B cell (primary cell): ENCODE measurements at regions of chr16 and their contacts with region 1.

Region 1: DNA sequence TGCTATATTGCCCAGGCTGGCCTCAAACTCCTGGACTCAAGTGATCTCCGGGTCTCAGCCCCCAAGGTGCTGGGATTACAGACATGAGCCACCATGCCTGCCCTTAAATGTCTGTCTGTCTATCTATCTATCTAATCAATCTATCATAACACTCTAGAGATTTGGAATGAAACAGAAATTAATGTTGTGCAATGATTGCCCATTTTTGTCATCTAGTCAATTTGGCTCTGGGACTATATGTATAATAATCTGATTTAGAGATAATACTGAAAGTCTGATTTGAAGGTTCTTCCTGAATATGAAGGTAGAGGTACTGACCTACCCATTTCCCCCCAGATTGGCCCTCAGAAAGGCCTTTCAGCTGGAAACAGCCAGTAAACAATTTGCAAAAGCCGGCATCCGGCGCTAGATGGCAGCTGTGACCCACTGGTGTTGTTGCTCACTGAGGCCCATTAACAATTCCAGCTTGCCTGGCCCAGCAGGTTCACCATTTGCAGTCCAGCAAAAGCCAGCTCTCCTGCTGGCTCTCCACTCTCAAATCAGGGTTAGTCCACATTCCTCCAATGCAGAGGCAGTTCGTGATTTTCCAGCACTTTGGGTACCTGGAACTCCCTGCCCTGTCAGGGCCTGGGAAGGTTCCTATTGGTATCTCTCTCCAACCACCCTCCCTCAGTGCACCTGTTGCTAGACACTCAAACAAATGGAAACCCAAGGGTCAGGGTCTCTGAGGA is 22.9 kb upstream of the C16orf87 start:
- DNase-seq: peak; percentile 74
- ATAC-seq: peak; percentile 69
- H3K4me3 ChIP-seq: no peak overlapping the region
- H3K4me3 Mint-ChIP-seq: no peak overlapping the region
- H3K27ac ChIP-seq: no peak overlapping the region
- H3K27ac Mint-ChIP-seq: peak overlapping the region; percentile 7
- H3K4me1 ChIP-seq: peaks cover 6 to 18% of the 10 kb centered on the region in 2 donors
- H3K4me1 Mint-ChIP-seq: peaks cover 17% of the 10 kb centered on the region
- H3K27me3 ChIP-seq: no peaks in the 10 kb centered on the region
- H3K27me3 Mint-ChIP-seq: no peaks in the 10 kb centered on the region
- CTCF ChIP-seq: peak; percentile 80

Region 2: GRCh38 chr16:46591257-46591656 is 262.6 kb before region 1 on chr16:
- CTCF ChIA-PET with region 1: no interaction called
- POLR2A ChIA-PET with region 1: no interaction called
- intact Hi-C with region 1: no loop called
- DNase-seq: no peak
- ATAC-seq: no peak
- H3K4me3 ChIP-seq: no peak overlapping the region
- H3K4me3 Mint-ChIP-seq: no peak overlapping the region
- H3K27ac ChIP-seq: no peak overlapping the region
- H3K27ac Mint-ChIP-seq: no peak overlapping the region
- H3K4me1 ChIP-seq: no peaks in the 10 kb centered on the region
- H3K4me1 Mint-ChIP-seq: no peaks in the 10 kb centered on the region
- H3K27me3 ChIP-seq: no peaks in the 10 kb centered on the region
- H3K27me3 Mint-ChIP-seq: no peaks in the 10 kb centered on the region
- CTCF ChIP-seq: no peak

Region 3: GRCh38 chr16:46830902-46831647 is 22.8 kb before region 1 on chr16 and contains the start of gene C16orf87:
- CTCF ChIA-PET with region 1: interaction called, 11 read pairs
- POLR2A ChIA-PET with region 1: no interaction called
- intact Hi-C with region 1: no loop called
- DNase-seq: peak; percentile 97
- ATAC-seq: peak; percentile 92
- H3K4me3 ChIP-seq: peak within 1 kb of the TSS; percentile 75 to 88 (median 82)
- H3K4me3 Mint-ChIP-seq: peak within 1 kb of the TSS; percentile 95
- H3K27ac ChIP-seq: peak within 1 kb of the TSS; percentile 55 to 85
- H3K27ac Mint-ChIP-seq: peak within 1 kb of the TSS; percentile 93
- H3K4me1 ChIP-seq: peaks cover 34 to 47% of the 10 kb centered on the region in 2 donors
- H3K4me1 Mint-ChIP-seq: peaks cover 59% of the 10 kb centered on the region
- H3K27me3 ChIP-seq: no peaks in the 10 kb centered on the region
- H3K27me3 Mint-ChIP-seq: no peaks in the 10 kb centered on the region
- CTCF ChIP-seq: no peak
- total RNA-seq, gene C16orf87: 11.3 and 12.5 TPM in 2 replicates

Region 4: GRCh38 chr16:46883690-46884512 is 30.0 kb after region 1 on chr16 and contains the start of gene GPT2:
- CTCF ChIA-PET with region 1: interaction called, 10 read pairs
- POLR2A ChIA-PET with region 1: interaction called, 3 read pairs
- intact Hi-C with region 1: no loop called
- DNase-seq: peak; percentile 83
- ATAC-seq: peak; percentile 95
- H3K4me3 ChIP-seq: peak within 1 kb of the TSS; percentile 48 to 84 (median 72)
- H3K4me3 Mint-ChIP-seq: peak within 1 kb of the TSS; percentile 89
- H3K27ac ChIP-seq: no peak within 1 kb of the TSS
- H3K27ac Mint-ChIP-seq: peak within 1 kb of the TSS; percentile 67
- H3K4me1 ChIP-seq: peaks cover 9 to 11% of the 10 kb centered on the region in 2 donors
- H3K4me1 Mint-ChIP-seq: peaks cover 18% of the 10 kb centered on the region
- H3K27me3 ChIP-seq: peaks cover 0 to 5% (median 2%) of the 10 kb centered on the region in 4 experiments
- H3K27me3 Mint-ChIP-seq: no peaks in the 10 kb centered on the region
- CTCF ChIP-seq: no peak
- total RNA-seq, gene GPT2: 9.9 and 11.0 TPM in 2 replicates

Region 5: GRCh38 chr16:46918861-46919792 is 65.2 kb after region 1 on chr16:
- CTCF ChIA-PET with region 1: interaction called, 149 read pairs
- POLR2A ChIA-PET with region 1: interaction called, 5 read pairs
- intact Hi-C with region 1: loop called (anchors 1 kb)
- DNase-seq: peak; percentile 79
- ATAC-seq: peak; percentile 62
- H3K4me3 ChIP-seq: peak overlapping the region in 3 of 5 experiments; percentile 11 to 53 (median 33)
- H3K4me3 Mint-ChIP-seq: peak overlapping the region; percentile 75
- H3K27ac ChIP-seq: peak overlapping the region; percentile 23 to 54
- H3K27ac Mint-ChIP-seq: peak overlapping the region; percentile 85
- H3K4me1 ChIP-seq: peaks cover 45 to 68% of the 10 kb centered on the region in 2 donors
- H3K4me1 Mint-ChIP-seq: peaks cover 67% of the 10 kb centered on the region
- H3K27me3 ChIP-seq: no peaks in the 10 kb centered on the region
- H3K27me3 Mint-ChIP-seq: no peaks in the 10 kb centered on the region
- CTCF ChIP-seq: peak; percentile 47

Region 6: DNA sequence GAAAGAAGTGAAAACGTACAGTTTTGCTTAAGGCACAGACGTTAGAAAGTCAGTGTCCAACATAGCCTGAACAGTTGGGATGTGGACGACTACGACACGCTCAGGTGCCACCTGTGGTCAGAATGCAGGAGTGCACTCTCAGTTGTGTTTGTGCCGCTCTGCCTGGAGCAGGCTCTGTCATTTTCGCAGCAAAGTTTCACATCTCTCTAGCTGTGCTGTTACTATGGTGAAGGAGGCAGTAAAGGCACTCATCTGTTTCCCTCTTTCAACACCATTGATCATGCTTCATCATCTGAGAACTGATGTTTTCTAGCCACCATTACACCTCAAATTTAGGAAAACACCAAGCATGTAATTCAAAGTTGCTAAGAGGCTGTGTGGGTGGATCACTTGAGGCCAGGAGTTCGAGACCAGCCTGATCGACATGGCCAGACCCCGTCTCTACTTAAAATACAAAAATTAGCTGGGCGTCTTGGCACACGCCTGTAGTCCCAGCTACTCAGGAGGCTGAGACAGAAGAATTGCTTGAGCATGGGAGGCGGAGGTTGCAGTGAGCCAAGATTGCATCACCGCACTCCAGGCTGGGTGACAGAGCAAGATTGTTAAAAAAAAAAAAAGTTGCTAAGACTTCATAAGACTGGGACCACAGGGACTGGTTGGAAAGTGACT is 164.5 kb after region 1 on chr16:
- CTCF ChIA-PET with region 1: interaction called, 5 read pairs
- POLR2A ChIA-PET with region 1: no interaction called
- intact Hi-C with region 1: loop called (anchors 1 kb)
- DNase-seq: peak; percentile 91
- ATAC-seq: peak; percentile 99
- H3K4me3 ChIP-seq: no peak overlapping the region
- H3K4me3 Mint-ChIP-seq: peak overlapping the region; percentile 62
- H3K27ac ChIP-seq: peak overlapping the region; percentile 55 to 65
- H3K27ac Mint-ChIP-seq: peak overlapping the region; percentile 58
- H3K4me1 ChIP-seq: peaks cover 23 to 29% of the 10 kb centered on the region in 2 donors
- H3K4me1 Mint-ChIP-seq: peaks cover 24% of the 10 kb centered on the region
- H3K27me3 ChIP-seq: no peaks in the 10 kb centered on the region
- H3K27me3 Mint-ChIP-seq: no peaks in the 10 kb centered on the region
- CTCF ChIP-seq: peak; percentile 78

Region 7: DNA sequence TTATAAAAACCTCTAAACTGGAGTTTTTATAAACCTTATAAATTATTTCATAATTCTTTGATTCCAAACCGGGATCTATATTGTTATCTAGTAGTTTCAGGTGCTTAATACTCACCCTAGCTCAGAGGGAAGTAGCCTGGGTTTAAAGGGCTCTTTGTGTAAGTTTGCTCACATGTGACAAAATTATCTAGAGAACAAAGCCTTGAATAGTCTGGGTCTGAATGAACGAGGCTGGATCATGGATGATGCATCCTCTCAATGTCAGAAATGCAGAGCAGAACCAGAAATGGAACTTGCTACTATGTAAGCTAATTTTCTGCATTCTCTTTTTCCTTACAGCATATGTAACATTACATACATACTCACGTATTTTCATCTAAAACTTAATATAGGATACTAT is 393.8 kb after region 1 on chr16:
- CTCF ChIA-PET with region 1: no interaction called
- POLR2A ChIA-PET with region 1: no interaction called
- intact Hi-C with region 1: no loop called
- DNase-seq: no peak
- ATAC-seq: no peak
- H3K4me3 ChIP-seq: no peak overlapping the region
- H3K4me3 Mint-ChIP-seq: no peak overlapping the region
- H3K27ac ChIP-seq: no peak overlapping the region
- H3K27ac Mint-ChIP-seq: no peak overlapping the region
- H3K4me1 ChIP-seq: no peaks in the 10 kb centered on the region
- H3K4me1 Mint-ChIP-seq: no peaks in the 10 kb centered on the region
- H3K27me3 ChIP-seq: no peaks in the 10 kb centered on the region
- H3K27me3 Mint-ChIP-seq: no peaks in the 10 kb centered on the region
- CTCF ChIP-seq: no peak

Region 8: DNA sequence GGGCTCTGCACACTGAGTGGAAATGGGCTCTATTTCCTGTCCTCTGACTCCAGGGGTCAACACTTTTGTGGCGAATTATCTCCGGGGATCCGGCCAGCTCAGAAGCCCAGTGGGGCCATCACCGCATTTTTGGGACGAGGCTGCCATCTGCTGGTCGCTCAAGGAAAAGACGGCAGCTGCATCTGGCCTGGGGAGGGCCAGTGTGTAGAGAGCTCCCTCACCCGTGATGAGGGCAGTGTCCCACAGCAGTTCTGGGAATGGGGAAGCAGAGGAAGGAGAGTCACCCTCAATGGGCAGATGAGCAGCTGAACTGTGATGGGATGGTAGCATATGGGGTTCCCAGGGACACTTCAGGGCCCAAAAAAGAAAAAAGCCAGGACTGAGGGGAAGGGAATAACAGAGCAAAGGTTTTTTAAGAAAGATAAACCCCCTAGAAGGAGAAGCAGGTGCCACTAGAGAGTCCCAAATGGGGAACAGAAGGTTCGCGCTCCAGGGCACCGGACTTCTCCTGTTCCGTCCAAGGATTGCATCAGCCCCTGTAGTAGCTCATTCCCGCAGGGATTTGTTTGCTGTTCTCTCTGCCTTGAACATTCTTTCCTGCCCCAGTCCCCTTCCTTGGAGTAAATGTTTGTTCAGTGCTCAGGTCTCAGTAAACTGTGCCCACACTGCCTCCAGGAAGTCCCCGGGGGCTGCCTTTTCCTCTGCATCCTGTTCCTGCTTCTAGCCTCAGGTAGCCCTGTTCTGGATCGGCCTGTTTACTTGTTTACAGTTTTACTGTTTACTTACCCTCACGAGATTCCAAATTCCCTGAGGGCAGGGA is 1311.2 kb after region 1 on chr16:
- CTCF ChIA-PET with region 1: interaction called, 13 read pairs
- POLR2A ChIA-PET with region 1: no interaction called
- intact Hi-C with region 1: loop called (anchors 1 kb)
- DNase-seq: peak; percentile 75
- ATAC-seq: peak; percentile 90
- H3K4me3 ChIP-seq: no peak overlapping the region
- H3K4me3 Mint-ChIP-seq: no peak overlapping the region
- H3K27ac ChIP-seq: no peak overlapping the region
- H3K27ac Mint-ChIP-seq: peak overlapping the region; percentile 27
- H3K4me1 ChIP-seq: peaks cover 0 to 2% of the 10 kb centered on the region in 2 donors
- H3K4me1 Mint-ChIP-seq: peaks cover 3% of the 10 kb centered on the region
- H3K27me3 ChIP-seq: no peaks in the 10 kb centered on the region
- H3K27me3 Mint-ChIP-seq: no peaks in the 10 kb centered on the region
- CTCF ChIP-seq: peak; percentile 90